ENCODE measurements at regions of chr16 and their contacts with region 1.

Region 1: DNA sequence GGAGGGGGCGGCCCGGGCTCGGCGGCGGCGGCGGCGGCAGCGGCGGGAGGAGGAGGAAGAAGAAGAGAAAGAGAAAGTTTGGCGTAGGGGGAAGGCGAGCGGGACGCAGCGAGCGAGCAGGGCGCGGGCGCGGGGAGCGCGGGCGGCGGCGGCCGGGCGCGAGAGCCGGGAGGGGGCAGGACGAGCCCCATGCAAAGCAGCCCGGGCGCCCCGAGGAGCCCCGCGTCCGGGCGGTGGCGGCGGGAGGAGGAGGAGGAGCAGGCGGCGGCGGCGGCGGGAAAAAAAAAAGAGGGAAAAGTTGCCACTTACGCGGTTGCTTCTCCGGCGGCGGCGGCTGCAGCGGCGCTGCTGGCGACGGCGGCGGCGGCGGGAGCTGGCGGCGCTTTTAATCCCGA is 10.3 kb upstream of the ZFHX3 start:
- DNase-seq: peak; percentile 40 to 73 (median 55)
- H3K4me3 ChIP-seq: peak overlapping the region; percentile 77
- H3K27ac ChIP-seq: peak overlapping the region; percentile 92 to 93
- H3K4me1 ChIP-seq: peaks cover 2% of the 10 kb centered on the region
- H3K27me3 ChIP-seq: no peaks in the 10 kb centered on the region
- CTCF ChIP-seq: no peak
- EP300 ChIP-seq: no peak
- POLR2A ChIP-seq: no peak

Region 2: DNA sequence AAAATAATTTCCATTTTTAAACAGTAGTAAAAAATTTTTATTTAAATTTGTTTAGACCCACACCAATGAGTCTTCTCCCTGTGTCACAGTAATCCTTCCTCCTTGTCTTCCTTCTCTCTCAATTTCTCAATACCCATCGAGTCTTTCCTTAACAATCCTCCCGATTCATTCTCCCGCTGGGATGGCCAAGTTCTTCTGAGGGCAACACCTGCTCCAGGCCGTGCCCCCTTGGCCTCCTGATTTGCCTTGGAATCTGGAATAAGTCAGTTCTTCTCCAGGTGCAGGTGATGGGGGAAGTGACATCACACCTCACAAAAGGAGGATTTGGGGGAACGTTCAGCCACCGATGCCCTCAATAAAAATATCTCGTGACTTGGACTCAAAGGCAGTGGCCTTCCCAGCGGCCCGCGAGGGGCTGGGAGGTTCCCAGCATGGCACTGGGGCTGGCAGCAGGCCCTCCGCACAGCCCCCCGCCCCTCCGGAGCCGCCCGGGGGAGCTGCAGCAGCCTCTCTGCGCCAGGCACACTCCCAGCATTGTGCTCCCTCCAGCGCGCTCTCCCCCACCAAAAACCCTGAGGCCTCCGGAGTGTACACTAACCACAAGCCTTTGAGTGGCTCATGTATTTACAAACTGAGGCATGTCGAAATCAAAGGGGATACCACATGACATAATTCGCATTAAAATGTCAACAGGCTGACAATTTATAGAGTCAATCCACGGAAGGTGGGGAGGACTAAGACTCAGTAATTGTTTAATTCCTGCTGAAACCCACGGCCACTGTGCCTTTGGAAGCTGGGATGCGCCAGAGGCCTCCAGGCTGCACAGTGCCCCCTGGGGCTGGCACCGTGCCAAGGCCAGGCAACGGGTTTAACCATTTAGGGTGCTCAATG is 130.8 kb before region 1 on chr16:
- intact Hi-C with region 1: loop called in 1 of 4 experiments (anchors 10 kb)
- DNase-seq: no peak
- H3K4me3 ChIP-seq: no peak overlapping the region
- H3K27ac ChIP-seq: no peak overlapping the region
- H3K4me1 ChIP-seq: peaks cover 10% of the 10 kb centered on the region
- H3K27me3 ChIP-seq: no peaks in the 10 kb centered on the region
- CTCF ChIP-seq: no peak
- EP300 ChIP-seq: no peak
- POLR2A ChIP-seq: no peak

Region 3: GRCh38 chr16:73315645-73316044 is 257.4 kb after region 1 on chr16:
- intact Hi-C with region 1: no loop called
- DNase-seq: no peak
- H3K4me3 ChIP-seq: no peak overlapping the region
- H3K27ac ChIP-seq: no peak overlapping the region
- H3K4me1 ChIP-seq: no peaks in the 10 kb centered on the region
- H3K27me3 ChIP-seq: no peaks in the 10 kb centered on the region
- CTCF ChIP-seq: no peak
- EP300 ChIP-seq: no peak
- POLR2A ChIP-seq: no peak

Measured in ovary (tissue), 10 donors.